IMR-90 (cell line): ENCODE measurements at regions of chr3 and their contacts with region 1.

Region 1: DNA sequence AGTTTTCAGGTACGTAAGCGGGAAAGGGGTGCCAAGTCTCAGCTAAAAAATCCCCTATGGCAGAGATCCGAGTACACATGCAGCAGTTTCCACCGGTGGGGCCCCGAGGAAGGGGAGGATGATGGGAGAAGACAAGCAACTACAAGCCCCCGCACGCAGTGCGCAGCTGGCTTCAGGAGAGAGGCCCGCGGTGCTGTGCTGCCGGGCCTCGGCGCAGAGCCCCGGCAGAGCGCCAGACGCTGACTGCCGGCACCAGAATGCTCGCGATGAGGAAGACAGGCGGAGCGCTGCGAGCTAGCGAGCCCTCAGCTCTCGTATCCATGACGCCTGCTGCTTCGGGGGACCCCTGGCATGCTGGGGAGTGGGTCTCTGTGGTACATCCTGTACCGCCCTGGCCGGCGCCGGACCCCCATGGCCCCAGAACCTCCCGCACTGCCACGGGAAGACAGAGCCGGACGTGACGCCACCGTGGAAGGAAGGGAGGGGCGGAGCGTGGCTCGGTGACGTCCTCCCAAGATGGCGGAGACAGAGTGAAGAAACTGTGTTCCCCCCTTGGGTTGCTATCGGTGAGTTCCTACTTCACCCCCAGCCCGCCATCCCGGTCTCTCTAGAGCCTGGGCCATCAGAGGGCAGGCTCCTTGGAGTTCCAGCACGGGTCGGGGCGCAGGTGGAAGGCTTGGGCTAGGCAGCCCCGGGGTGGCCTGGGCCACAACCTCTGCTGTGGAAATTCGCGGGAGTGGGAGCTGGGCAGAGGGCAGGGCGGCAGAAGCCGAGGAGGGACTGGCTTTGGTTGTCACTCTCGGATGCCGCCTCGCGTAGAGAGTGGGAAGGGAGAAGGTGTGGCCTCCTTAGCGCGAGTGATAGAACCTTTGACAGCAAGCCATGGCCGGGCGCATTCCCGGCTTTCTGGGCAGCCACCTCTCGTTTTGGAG is at the start of gene MYNN:
- DNase-seq: peak; percentile 86
- ATAC-seq: peak; percentile 86
- H3K4me3 ChIP-seq: peak within 1 kb of the TSS; percentile 80
- H3K27ac ChIP-seq: peak within 1 kb of the TSS; percentile 94
- H3K4me1 ChIP-seq: no peaks in the 10 kb centered on the region
- H3K27me3 ChIP-seq: no peaks in the 10 kb centered on the region
- CTCF ChIP-seq: peak; percentile 18; the same call in 1 of the 2 replicates
- POLR2A ChIP-seq: peak; percentile 97
- RAD21 ChIP-seq: no peak; the same call in 1 of the 2 replicates
- total RNA-seq, gene MYNN: 26.9 and 33.1 TPM in 2 replicates

Region 2: GRCh38 chr3:169812332-169813235 is 39.4 kb after region 1 on chr3 and contains the starts of genes LRRC34 and LRRIQ4:
- CTCF ChIA-PET with region 1: interaction called, 4 read pairs
- POLR2A ChIA-PET with region 1: interaction called, 19 read pairs
- dilution Hi-C with region 1: no loop called
- in situ Hi-C with region 1: no loop called
- intact Hi-C with region 1: loop called (anchors 5 kb)
- DNase-seq: peak; percentile 63
- ATAC-seq: peak; percentile 89
- H3K4me3 ChIP-seq: peak within 1 kb of the TSS; percentile 29
- H3K27ac ChIP-seq: peak within 1 kb of the TSS; percentile 52
- H3K4me1 ChIP-seq: peaks cover 3% of the 10 kb centered on the region
- H3K27me3 ChIP-seq: no peaks in the 10 kb centered on the region
- CTCF ChIP-seq: no peak
- POLR2A ChIP-seq: no peak
- RAD21 ChIP-seq: no peak
- total RNA-seq, gene LRRC34: 0.90 and 1.1 TPM in 2 replicates
- total RNA-seq, gene LRRIQ4: not detected in 2 replicates

Region 3: GRCh38 chr3:169980055-169980454 is 206.9 kb after region 1 on chr3:
- CTCF ChIA-PET with region 1: no interaction called
- POLR2A ChIA-PET with region 1: no interaction called
- dilution Hi-C with region 1: no loop called
- in situ Hi-C with region 1: no loop called
- intact Hi-C with region 1: loop called (anchors 10 kb)
- DNase-seq: peak; percentile 84
- ATAC-seq: peak; percentile 92
- H3K4me3 ChIP-seq: no peak overlapping the region
- H3K27ac ChIP-seq: no peak overlapping the region
- H3K4me1 ChIP-seq: peaks cover 8% of the 10 kb centered on the region
- H3K27me3 ChIP-seq: no peaks in the 10 kb centered on the region
- CTCF ChIP-seq: no peak
- POLR2A ChIP-seq: no peak
- RAD21 ChIP-seq: no peak